PC-9 (cell line): ENCODE measurements at regions of chr3 and their contacts with region 1.

Region 1: GRCh38 chr3:9491506-9491905 is 62.1 kb downstream of the LHFPL4 start:
- DNase-seq: no peak
- H3K4me3 ChIP-seq: no peak overlapping the region
- H3K27ac ChIP-seq: no peak overlapping the region
- H3K4me1 ChIP-seq: no peaks in the 10 kb centered on the region
- H3K27me3 ChIP-seq: no peaks in the 10 kb centered on the region
- CTCF ChIP-seq: no peak

Region 2: DNA sequence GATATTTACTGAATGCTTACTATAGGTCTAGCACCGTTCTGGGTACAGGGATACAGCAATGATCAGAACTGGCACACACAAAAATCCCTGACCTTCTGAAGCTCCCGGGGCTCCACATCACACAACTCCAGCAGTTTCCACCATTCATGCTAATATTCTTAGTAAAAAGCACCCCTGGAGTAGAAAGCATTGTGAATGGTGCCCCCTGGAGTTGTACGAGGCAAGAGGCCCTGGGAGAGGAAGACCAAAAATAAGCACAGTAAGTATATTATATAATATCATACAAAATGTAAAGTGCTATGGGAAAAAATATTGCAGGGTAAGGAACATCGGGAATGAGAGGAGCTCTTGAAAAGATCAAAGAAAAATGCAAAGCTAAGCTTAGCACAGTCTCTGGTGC is 241.3 kb before region 1 on chr3:
- CTCF ChIA-PET with region 1: no interaction called
- POLR2A ChIA-PET with region 1: no interaction called
- intact Hi-C with region 1: no loop called
- DNase-seq: no peak
- H3K4me3 ChIP-seq: no peak overlapping the region
- H3K27ac ChIP-seq: no peak overlapping the region
- H3K4me1 ChIP-seq: peaks cover 30% of the 10 kb centered on the region
- H3K27me3 ChIP-seq: no peaks in the 10 kb centered on the region
- CTCF ChIP-seq: no peak

Region 3: GRCh38 chr3:9396700-9397521 is 94.6 kb before region 1 on chr3:
- CTCF ChIA-PET with region 1: no interaction called
- POLR2A ChIA-PET with region 1: interaction called, 17 read pairs
- intact Hi-C with region 1: no loop called
- DNase-seq: peak; percentile 95 to 98
- H3K4me3 ChIP-seq: peak overlapping the region; percentile 63
- H3K27ac ChIP-seq: peak overlapping the region; percentile 91
- H3K4me1 ChIP-seq: peaks cover 60% of the 10 kb centered on the region
- H3K27me3 ChIP-seq: no peaks in the 10 kb centered on the region
- CTCF ChIP-seq: no peak